ENCODE measurements at regions of chr3 and their contacts with region 1.

Region 1: GRCh38 chr3:64267721-64268604 is 42.7 kb upstream of the PRICKLE2 start:
- DNase-seq: peak; percentile 75
- H3K4me3 Mint-ChIP-seq: peak overlapping the region; percentile 86
- H3K27ac Mint-ChIP-seq: peak overlapping the region; percentile 90
- H3K4me1 Mint-ChIP-seq: peaks cover 30% of the 10 kb centered on the region
- H3K27me3 Mint-ChIP-seq: no peaks in the 10 kb centered on the region
- CTCF ChIP-seq: no peak

Region 2: DNA sequence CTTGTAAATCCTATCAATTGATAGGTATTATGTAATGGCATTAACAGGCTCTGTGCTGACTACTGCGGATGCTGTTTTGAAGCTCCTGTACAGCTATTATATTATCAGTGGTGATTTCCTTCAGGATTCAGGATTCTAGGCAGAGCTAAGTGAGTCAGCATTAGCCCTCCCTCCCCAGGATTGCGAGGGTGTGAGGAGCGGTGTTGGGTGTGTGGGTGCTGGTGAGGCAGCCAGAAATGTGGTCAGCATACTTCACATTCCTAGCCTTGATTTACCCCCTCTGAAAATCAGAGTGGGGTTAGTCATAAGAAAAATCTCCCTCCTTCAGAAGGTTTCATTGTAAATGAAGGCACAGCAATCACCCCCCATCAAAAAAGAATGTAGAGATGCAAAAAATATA is 543.0 kb before region 1 on chr3:
- CTCF ChIA-PET with region 1: no interaction called
- POLR2A ChIA-PET with region 1: no interaction called
- intact Hi-C with region 1: no loop called
- DNase-seq: peak; percentile 62
- H3K4me3 Mint-ChIP-seq: no peak overlapping the region
- H3K27ac Mint-ChIP-seq: peak overlapping the region; percentile 80
- H3K4me1 Mint-ChIP-seq: peaks cover 16% of the 10 kb centered on the region
- H3K27me3 Mint-ChIP-seq: no peaks in the 10 kb centered on the region
- CTCF ChIP-seq: no peak

Region 3: DNA sequence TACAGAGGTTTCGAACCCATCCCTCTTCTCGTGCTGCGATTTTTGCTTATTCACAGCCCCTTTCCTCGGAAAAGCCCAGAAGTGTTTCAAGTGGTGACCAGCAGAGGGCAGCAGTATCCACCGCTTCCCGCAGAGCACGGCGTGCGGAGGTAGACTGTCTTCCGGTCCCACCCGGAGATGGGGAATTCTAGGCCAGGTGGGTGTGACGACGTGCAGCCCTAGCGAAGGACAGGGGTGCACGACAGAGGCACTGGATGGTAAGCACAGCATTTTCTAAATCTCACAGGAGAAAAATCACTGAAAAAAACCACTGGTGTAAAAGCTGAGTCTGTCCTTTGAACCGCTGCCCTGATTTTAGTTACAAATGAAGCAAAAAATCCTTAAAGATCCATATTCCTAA is 237.2 kb before region 1 on chr3:
- CTCF ChIA-PET with region 1: interaction called, 24 read pairs
- POLR2A ChIA-PET with region 1: interaction called, 3 read pairs
- intact Hi-C with region 1: loop called (anchors 1 kb)
- DNase-seq: peak; percentile 75
- H3K4me3 Mint-ChIP-seq: peak overlapping the region; percentile 65
- H3K27ac Mint-ChIP-seq: no peak overlapping the region
- H3K4me1 Mint-ChIP-seq: peaks cover 8% of the 10 kb centered on the region
- H3K27me3 Mint-ChIP-seq: peaks cover 30% of the 10 kb centered on the region
- CTCF ChIP-seq: peak; percentile 86

Region 4: GRCh38 chr3:64163755-64164148 is 104.2 kb before region 1 on chr3:
- CTCF ChIA-PET with region 1: interaction called, 3 read pairs
- POLR2A ChIA-PET with region 1: interaction called, 34 read pairs
- intact Hi-C with region 1: no loop called
- DNase-seq: peak; percentile 85
- H3K4me3 Mint-ChIP-seq: peak overlapping the region; percentile 25
- H3K27ac Mint-ChIP-seq: peak overlapping the region; percentile 87
- H3K4me1 Mint-ChIP-seq: peaks cover 48% of the 10 kb centered on the region
- H3K27me3 Mint-ChIP-seq: no peaks in the 10 kb centered on the region
- CTCF ChIP-seq: no peak

Region 5: DNA sequence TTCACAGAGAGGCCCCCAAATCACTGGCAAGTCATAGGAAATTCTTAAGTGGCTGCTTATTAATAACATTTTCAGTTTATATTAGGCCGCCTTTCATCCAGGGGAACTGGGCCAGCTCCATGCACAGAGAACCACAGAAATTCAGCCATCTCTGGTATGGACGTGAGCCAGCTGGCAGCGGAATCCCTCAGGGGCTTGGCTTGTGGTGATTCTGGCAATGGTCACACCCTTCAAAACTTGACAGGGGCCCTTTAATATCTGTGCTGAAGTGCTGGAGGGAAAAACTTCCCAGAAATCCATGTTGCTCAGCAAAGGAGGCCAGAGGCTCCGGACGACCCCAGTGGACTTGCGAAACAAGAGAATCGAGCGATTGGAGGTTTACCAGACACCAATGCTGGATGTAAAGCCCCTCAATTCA is 54.0 kb before region 1 on chr3:
- CTCF ChIA-PET with region 1: interaction called, 4 read pairs
- POLR2A ChIA-PET with region 1: interaction called, 41 read pairs
- intact Hi-C with region 1: no loop called
- DNase-seq: peak; percentile 91
- H3K4me3 Mint-ChIP-seq: peak overlapping the region; percentile 55
- H3K27ac Mint-ChIP-seq: peak overlapping the region; percentile 56
- H3K4me1 Mint-ChIP-seq: peaks cover 21% of the 10 kb centered on the region
- H3K27me3 Mint-ChIP-seq: no peaks in the 10 kb centered on the region
- CTCF ChIP-seq: no peak

Region 6: GRCh38 chr3:64229903-64230302 is 38.1 kb before region 1 on chr3:
- CTCF ChIA-PET with region 1: no interaction called
- POLR2A ChIA-PET with region 1: no interaction called
- intact Hi-C with region 1: no loop called
- DNase-seq: no peak
- H3K4me3 Mint-ChIP-seq: no peak overlapping the region
- H3K27ac Mint-ChIP-seq: no peak overlapping the region
- H3K4me1 Mint-ChIP-seq: peaks cover 9% of the 10 kb centered on the region
- H3K27me3 Mint-ChIP-seq: no peaks in the 10 kb centered on the region
- CTCF ChIP-seq: no peak

Region 7: DNA sequence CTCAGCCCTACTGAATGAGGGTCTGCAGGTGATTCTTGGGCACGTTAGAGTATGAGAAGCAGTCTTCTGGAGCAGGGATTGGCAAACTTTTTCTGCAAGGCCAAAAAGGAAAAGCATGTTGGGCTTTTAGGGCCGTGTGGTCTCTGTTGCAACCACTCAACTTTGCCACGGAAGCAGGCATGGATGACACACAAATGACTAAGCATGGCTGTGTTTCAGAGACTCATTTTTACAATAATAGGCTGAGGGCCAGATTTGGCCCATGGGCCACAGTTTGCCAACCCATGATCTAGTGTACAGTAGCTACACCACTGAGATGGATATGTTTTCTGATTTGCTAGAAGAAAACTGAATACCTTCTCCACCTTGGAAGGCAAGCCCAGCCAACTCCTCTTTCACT is 23.4 kb after region 1 on chr3:
- CTCF ChIA-PET with region 1: interaction called, 9 read pairs
- POLR2A ChIA-PET with region 1: interaction called, 32 read pairs
- intact Hi-C with region 1: loop called (anchors 1 kb)
- DNase-seq: peak; percentile 97
- H3K4me3 Mint-ChIP-seq: no peak overlapping the region
- H3K27ac Mint-ChIP-seq: peak overlapping the region; percentile 88
- H3K4me1 Mint-ChIP-seq: peaks cover 17% of the 10 kb centered on the region
- H3K27me3 Mint-ChIP-seq: no peaks in the 10 kb centered on the region
- CTCF ChIP-seq: no peak

Region 8: DNA sequence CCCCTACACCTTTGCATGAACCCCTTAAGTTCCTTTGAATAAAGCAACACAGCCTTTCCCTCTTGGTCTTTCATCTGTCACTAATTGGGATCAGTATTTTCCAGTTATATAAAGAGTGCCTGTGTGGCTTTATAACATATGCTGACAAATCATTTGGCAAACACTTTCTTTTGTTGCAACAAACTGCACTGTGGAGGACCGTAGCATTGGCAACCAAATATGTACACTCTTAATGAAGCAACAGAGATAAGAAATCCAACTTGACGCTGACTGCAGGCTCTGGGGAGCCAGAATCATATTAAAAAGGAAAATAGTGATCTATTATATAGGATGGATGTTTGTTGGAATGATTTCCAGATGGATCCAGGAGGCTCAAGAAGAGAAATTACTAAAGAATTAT is 77.4 kb after region 1 on chr3:
- CTCF ChIA-PET with region 1: interaction called, 11 read pairs
- POLR2A ChIA-PET with region 1: interaction called, 44 read pairs
- intact Hi-C with region 1: loop called (anchors 2 kb)
- DNase-seq: peak; percentile 68
- H3K4me3 Mint-ChIP-seq: no peak overlapping the region
- H3K27ac Mint-ChIP-seq: peak overlapping the region; percentile 96
- H3K4me1 Mint-ChIP-seq: peaks cover 45% of the 10 kb centered on the region
- H3K27me3 Mint-ChIP-seq: no peaks in the 10 kb centered on the region
- CTCF ChIP-seq: no peak

Region 9: DNA sequence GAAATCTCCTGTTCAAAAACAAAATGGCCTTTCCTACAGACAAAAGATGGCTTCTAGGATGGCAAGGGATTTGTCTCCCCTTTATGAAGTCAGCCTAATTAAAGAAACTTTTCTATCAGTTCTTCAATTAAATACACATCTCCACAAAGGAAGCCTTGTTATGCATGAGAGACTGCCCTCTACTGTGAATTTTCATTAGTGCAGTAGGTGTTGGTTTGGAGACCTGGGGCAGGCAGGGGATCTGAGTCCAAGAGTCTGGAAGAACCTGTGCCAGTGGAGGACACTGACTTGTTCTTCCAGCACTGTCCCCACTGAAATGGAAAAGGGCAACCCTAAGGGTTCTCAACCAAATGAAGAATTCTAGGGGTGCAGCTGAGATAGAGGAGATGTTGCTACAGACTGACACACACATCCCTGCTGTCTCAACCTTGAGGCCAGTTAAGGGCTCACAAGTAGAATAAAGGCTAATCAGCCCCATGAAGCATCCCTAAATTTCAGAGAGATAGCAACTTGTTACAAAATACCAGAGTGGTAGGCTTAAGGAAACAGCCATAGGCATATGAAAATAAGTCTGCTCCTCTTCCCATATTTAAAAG is 131.3 kb after region 1 on chr3:
- CTCF ChIA-PET with region 1: interaction called, 14 read pairs
- POLR2A ChIA-PET with region 1: interaction called, 4 read pairs
- intact Hi-C with region 1: loop called (anchors 1 kb)
- DNase-seq: peak; percentile 78
- H3K4me3 Mint-ChIP-seq: no peak overlapping the region
- H3K27ac Mint-ChIP-seq: no peak overlapping the region
- H3K4me1 Mint-ChIP-seq: no peaks in the 10 kb centered on the region
- H3K27me3 Mint-ChIP-seq: no peaks in the 10 kb centered on the region
- CTCF ChIP-seq: peak; percentile 83